Heart right ventricle (tissue), 16 donors: ENCODE measurements at regions of chr7 and their contacts with region 1.

Region 1: GRCh38 chr7:8724080-8724718 is 290.8 kb downstream of the NXPH1 start:
- DNase-seq: peak in 1 of 2 donors; percentile 25
- ATAC-seq: no peak
- H3K4me3 ChIP-seq: no peak overlapping the region
- H3K27ac ChIP-seq: no peak overlapping the region
- H3K4me1 ChIP-seq: no peaks in the 10 kb centered on the region
- H3K27me3 ChIP-seq: no peaks in the 10 kb centered on the region
- CTCF ChIP-seq: peak in 8 of 9 donors; percentile 38 to 59 (median 48)

Region 2: GRCh38 chr7:8418629-8419245 is 305.5 kb before region 1 on chr7:
- intact Hi-C with region 1: loop called in 5 of 10 experiments (anchors 5 to 10 kb)
- DNase-seq: peak in 1 of 2 donors; percentile 42
- ATAC-seq: peak in 2 of 8 donors; percentile 53 to 63
- H3K4me3 ChIP-seq: no peak overlapping the region
- H3K27ac ChIP-seq: no peak overlapping the region
- H3K4me1 ChIP-seq: no peaks in the 10 kb centered on the region
- H3K27me3 ChIP-seq: peaks cover 0 to 18% (median 4%) of the 10 kb centered on the region in 7 donors
- CTCF ChIP-seq: peak; percentile 47 to 84 (median 79)

Region 3: GRCh38 chr7:8684426-8684825 is 39.8 kb before region 1 on chr7:
- intact Hi-C with region 1: loop called in 1 of 10 experiments (anchors 5 kb)
- DNase-seq: no peak
- ATAC-seq: no peak
- H3K4me3 ChIP-seq: no peak overlapping the region
- H3K27ac ChIP-seq: no peak overlapping the region
- H3K4me1 ChIP-seq: no peaks in the 10 kb centered on the region
- H3K27me3 ChIP-seq: no peaks in the 10 kb centered on the region
- CTCF ChIP-seq: no peak